CD4-positive, alpha-beta memory T cell (primary cell): ENCODE measurements at regions of chr1 and their contacts with region 1.

Region 1: GRCh38 chr1:212455803-212456528 is 23.2 kb downstream of the NENF start:
- DNase-seq: peak; percentile 65 to 73 (median 69)
- H3K4me3 ChIP-seq: no peak overlapping the region
- H3K4me3 Mint-ChIP-seq: no peak overlapping the region
- H3K27ac ChIP-seq: no peak overlapping the region
- H3K27ac Mint-ChIP-seq: no peak overlapping the region
- H3K4me1 ChIP-seq: peaks cover 3% of the 10 kb centered on the region
- H3K4me1 Mint-ChIP-seq: peaks cover 0 to 10% (median under 1%) of the 10 kb centered on the region in 4 donors
- H3K27me3 ChIP-seq: no peaks in the 10 kb centered on the region
- H3K27me3 Mint-ChIP-seq: no peaks in the 10 kb centered on the region

Region 2: DNA sequence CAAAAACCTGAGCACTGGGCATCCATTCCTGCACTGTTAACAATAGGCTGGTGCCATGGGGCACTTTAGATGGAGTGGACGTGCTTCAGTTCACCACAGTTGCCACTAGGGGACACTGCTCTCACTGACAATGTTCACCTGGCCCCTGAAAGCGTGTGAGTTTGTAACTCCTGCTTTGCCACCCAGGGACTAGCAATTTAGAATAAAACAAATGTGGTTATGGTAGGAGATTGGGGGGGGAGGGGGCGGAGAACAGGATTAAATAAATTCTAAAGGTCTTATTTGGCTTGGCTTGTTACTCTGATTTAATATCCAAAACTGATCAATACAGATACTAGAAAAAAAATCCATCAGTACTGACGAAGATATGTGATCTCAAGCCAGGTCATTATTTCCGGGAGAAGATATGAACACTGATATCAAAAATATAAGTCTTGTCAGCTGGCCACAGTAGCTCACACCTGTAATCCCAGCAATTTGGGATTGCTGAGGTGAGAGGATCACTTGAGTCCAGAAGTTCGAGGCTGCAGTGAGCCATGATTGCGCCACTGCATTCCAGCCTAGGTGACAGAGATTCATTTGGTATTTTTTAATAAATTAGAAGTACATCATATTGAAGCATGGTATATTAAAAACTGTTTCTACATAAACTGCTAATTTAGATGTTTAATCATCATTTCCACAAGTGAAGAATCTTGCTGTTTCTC is 443.8 kb before region 1 on chr1:
- CTCF ChIA-PET with region 1: interaction called, 28 read pairs
- POLR2A ChIA-PET with region 1: no interaction called
- intact Hi-C with region 1: loop called (anchors 1 kb)
- DNase-seq: peak; percentile 42 to 66 (median 53)
- H3K4me3 ChIP-seq: no peak overlapping the region
- H3K4me3 Mint-ChIP-seq: no peak overlapping the region
- H3K27ac ChIP-seq: no peak overlapping the region
- H3K27ac Mint-ChIP-seq: peak overlapping the region in 1 of 7 donors; percentile 3
- H3K4me1 ChIP-seq: no peaks in the 10 kb centered on the region
- H3K4me1 Mint-ChIP-seq: peaks cover 0 to 7% (median 4%) of the 10 kb centered on the region in 4 donors
- H3K27me3 ChIP-seq: no peaks in the 10 kb centered on the region
- H3K27me3 Mint-ChIP-seq: no peaks in the 10 kb centered on the region

Region 3: DNA sequence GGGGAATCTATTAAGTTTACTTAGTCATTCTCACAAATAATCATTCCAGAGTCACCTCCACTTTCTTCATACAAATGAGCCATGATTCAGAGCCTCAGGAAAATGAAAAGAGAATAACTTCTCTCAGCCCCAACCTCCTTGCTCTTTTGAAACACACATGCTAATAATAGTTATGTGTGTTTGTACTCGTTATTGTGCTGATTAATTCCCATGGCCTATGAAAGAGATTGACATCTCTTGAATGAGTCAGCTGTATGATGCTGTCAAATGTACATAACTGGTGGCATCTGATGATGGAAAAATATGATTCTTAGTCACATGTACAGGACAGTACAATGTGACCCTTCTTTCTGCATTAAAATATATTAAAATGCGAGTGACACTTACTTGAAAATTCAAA is 378.9 kb before region 1 on chr1:
- CTCF ChIA-PET with region 1: interaction called, 404 read pairs
- POLR2A ChIA-PET with region 1: no interaction called
- intact Hi-C with region 1: no loop called
- DNase-seq: no peak
- H3K4me3 ChIP-seq: no peak overlapping the region
- H3K4me3 Mint-ChIP-seq: no peak overlapping the region
- H3K27ac ChIP-seq: no peak overlapping the region
- H3K27ac Mint-ChIP-seq: no peak overlapping the region
- H3K4me1 ChIP-seq: no peaks in the 10 kb centered on the region
- H3K4me1 Mint-ChIP-seq: no peaks in the 10 kb centered on the region
- H3K27me3 ChIP-seq: no peaks in the 10 kb centered on the region
- H3K27me3 Mint-ChIP-seq: no peaks in the 10 kb centered on the region

Region 4: DNA sequence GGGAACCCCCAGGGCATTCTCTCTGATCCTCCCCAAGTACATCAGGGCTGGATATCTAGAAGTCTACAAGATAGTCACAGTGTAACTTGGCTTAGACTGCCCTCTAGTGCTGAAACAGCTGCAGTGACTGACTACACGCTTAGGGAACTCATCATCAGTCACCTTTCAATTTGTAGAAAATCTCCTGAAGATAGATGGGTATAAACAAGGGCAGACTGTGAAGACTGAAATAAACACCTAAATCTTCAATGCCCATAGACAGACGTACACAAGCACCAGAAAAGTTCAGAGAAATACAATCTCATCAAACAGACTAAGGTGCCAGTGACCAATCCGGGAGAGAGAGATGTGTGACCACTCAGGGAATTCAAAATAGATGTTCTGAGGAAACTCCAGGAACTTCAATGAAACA is 87.9 kb before region 1 on chr1:
- CTCF ChIA-PET with region 1: interaction called, 46 read pairs
- POLR2A ChIA-PET with region 1: no interaction called
- intact Hi-C with region 1: loop called (anchors 5 kb)
- DNase-seq: peak; percentile 53 to 68 (median 57)
- H3K4me3 ChIP-seq: no peak overlapping the region
- H3K4me3 Mint-ChIP-seq: no peak overlapping the region
- H3K27ac ChIP-seq: no peak overlapping the region
- H3K27ac Mint-ChIP-seq: peak overlapping the region in 3 of 7 donors; percentile 10 to 55 (median 41)
- H3K4me1 ChIP-seq: no peaks in the 10 kb centered on the region
- H3K4me1 Mint-ChIP-seq: peaks cover 0 to 7% (median 1%) of the 10 kb centered on the region in 4 donors
- H3K27me3 ChIP-seq: no peaks in the 10 kb centered on the region
- H3K27me3 Mint-ChIP-seq: no peaks in the 10 kb centered on the region

Region 5: GRCh38 chr1:212440419-212440818 is 15.5 kb before region 1 on chr1:
- CTCF ChIA-PET with region 1: interaction called, 14 read pairs
- POLR2A ChIA-PET with region 1: no interaction called
- intact Hi-C with region 1: no loop called
- DNase-seq: no peak
- H3K4me3 ChIP-seq: no peak overlapping the region
- H3K4me3 Mint-ChIP-seq: no peak overlapping the region
- H3K27ac ChIP-seq: no peak overlapping the region
- H3K27ac Mint-ChIP-seq: no peak overlapping the region
- H3K4me1 ChIP-seq: no peaks in the 10 kb centered on the region
- H3K4me1 Mint-ChIP-seq: peaks cover 0 to 10% (median 1%) of the 10 kb centered on the region in 4 donors
- H3K27me3 ChIP-seq: no peaks in the 10 kb centered on the region
- H3K27me3 Mint-ChIP-seq: no peaks in the 10 kb centered on the region

Region 6: GRCh38 chr1:212638492-212639151 is 182.7 kb after region 1 on chr1:
- CTCF ChIA-PET with region 1: no interaction called
- POLR2A ChIA-PET with region 1: no interaction called
- intact Hi-C with region 1: no loop called
- DNase-seq: no peak
- H3K4me3 ChIP-seq: no peak overlapping the region
- H3K4me3 Mint-ChIP-seq: no peak overlapping the region
- H3K27ac ChIP-seq: no peak overlapping the region
- H3K27ac Mint-ChIP-seq: peak overlapping the region in 2 of 7 donors; percentile 4 to 57
- H3K4me1 ChIP-seq: peaks cover 26% of the 10 kb centered on the region
- H3K4me1 Mint-ChIP-seq: peaks cover 14 to 37% (median 26%) of the 10 kb centered on the region in 4 donors
- H3K27me3 ChIP-seq: peaks cover 4% of the 10 kb centered on the region
- H3K27me3 Mint-ChIP-seq: peaks cover 7 to 13% of the 10 kb centered on the region in 2 donors